ENCODE measurements at regions of chr5 and their contacts with region 1.

Region 1: GRCh38 chr5:138789771-138790242 is 36.6 kb downstream of the CTNNA1 start:
- DNase-seq: no peak
- H3K4me3 ChIP-seq: no peak overlapping the region
- CTCF ChIP-seq: peak; percentile 50

Region 2: DNA sequence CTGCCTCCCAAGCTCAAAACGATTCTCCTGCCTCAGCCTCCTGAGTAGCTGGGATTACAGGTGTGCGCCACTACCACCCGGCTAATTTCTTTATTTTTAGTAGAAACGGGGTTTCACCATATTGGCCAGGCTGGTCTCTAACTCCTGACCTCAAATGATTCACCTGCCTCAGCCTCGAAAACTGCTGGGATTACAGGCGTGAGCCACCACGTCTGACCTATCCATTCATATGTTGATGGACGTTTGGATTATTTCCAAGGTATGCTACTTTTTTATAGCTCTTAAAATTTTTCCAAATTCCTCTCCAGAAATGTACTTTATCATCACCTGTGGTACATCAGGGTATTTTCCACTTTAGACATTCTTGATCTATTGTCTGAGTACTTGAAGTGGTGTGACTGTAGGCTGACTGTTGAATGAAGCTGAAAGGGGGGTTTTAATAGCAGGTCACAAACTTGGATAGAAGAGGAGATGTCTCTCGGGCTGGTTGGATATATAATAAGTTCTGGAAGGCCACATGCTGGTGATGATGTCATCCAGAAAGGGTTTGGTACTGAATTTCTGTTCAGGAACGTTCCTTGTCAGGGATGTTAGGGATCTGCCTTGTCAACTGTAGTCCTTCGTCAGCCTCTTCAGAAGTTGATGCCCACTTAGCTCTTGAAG is 29.2 kb before region 1 on chr5:
- CTCF ChIA-PET with region 1: interaction called, 18 read pairs
- POLR2A ChIA-PET with region 1: no interaction called
- DNase-seq: no peak
- H3K4me3 ChIP-seq: no peak overlapping the region
- CTCF ChIP-seq: no peak

Region 3: GRCh38 chr5:138772986-138773594 is 16.7 kb before region 1 on chr5:
- CTCF ChIA-PET with region 1: interaction called, 25 read pairs
- POLR2A ChIA-PET with region 1: no interaction called
- DNase-seq: no peak
- H3K4me3 ChIP-seq: no peak overlapping the region
- CTCF ChIP-seq: no peak

Region 4: GRCh38 chr5:138809391-138809790 is 19.6 kb after region 1 on chr5:
- CTCF ChIA-PET with region 1: interaction called, 10 read pairs
- POLR2A ChIA-PET with region 1: interaction called, 4 read pairs
- DNase-seq: no peak
- H3K4me3 ChIP-seq: no peak overlapping the region
- CTCF ChIP-seq: no peak

Region 5: GRCh38 chr5:138819081-138819480 is 29.3 kb after region 1 on chr5:
- CTCF ChIA-PET with region 1: interaction called, 11 read pairs
- POLR2A ChIA-PET with region 1: no interaction called
- DNase-seq: no peak
- H3K4me3 ChIP-seq: no peak overlapping the region
- CTCF ChIP-seq: no peak

Region 6: GRCh38 chr5:138824924-138825863 is 35.4 kb after region 1 on chr5:
- CTCF ChIA-PET with region 1: interaction called, 12 read pairs
- POLR2A ChIA-PET with region 1: no interaction called
- DNase-seq: no peak
- H3K4me3 ChIP-seq: no peak overlapping the region
- CTCF ChIP-seq: peak; percentile 36

Region 7: DNA sequence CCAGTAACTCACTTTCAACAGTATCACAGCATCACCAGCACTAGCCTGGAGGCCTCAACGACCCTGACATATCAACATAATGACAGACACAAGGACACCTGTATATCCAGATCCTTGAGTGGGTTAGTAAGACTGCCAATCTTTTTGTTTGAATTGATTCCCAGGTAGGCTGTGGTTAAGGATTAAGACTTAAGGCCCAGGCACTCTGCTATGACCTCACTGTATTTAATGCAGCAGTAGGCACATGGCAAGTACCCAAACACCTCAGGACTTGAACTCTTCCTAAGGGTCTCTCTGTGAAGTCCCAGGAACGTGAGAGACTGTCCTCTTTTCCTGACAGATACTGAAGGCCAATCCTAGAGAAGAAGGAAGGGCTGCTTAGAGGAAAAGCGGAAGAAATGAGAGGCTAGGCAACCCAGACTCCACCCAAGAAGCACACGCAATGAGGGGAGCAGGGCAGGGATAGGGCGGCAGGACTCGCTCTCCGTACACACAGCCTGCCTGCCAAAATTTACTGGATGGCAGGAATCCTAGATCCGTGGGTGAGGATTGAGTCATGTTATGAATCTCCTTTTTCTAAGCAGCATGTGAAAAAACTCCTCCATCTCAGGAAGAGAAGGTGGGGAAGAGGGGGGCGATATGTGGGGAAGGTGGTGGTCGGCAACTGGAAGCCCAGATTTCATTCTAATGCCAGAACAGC is 314.9 kb after region 1 on chr5:
- CTCF ChIA-PET with region 1: no interaction called
- POLR2A ChIA-PET with region 1: no interaction called
- DNase-seq: peak; percentile 38
- H3K4me3 ChIP-seq: peak overlapping the region; percentile 3; the same call in 1 of the 2 replicates
- CTCF ChIP-seq: no peak